Activated CD4-positive, alpha-beta T cell treated with anti-CD3 and anti-CD28 coated beads for 36 hours (primary cell): ENCODE measurements at regions of chr16 and their contacts with region 1.

Region 1: DNA sequence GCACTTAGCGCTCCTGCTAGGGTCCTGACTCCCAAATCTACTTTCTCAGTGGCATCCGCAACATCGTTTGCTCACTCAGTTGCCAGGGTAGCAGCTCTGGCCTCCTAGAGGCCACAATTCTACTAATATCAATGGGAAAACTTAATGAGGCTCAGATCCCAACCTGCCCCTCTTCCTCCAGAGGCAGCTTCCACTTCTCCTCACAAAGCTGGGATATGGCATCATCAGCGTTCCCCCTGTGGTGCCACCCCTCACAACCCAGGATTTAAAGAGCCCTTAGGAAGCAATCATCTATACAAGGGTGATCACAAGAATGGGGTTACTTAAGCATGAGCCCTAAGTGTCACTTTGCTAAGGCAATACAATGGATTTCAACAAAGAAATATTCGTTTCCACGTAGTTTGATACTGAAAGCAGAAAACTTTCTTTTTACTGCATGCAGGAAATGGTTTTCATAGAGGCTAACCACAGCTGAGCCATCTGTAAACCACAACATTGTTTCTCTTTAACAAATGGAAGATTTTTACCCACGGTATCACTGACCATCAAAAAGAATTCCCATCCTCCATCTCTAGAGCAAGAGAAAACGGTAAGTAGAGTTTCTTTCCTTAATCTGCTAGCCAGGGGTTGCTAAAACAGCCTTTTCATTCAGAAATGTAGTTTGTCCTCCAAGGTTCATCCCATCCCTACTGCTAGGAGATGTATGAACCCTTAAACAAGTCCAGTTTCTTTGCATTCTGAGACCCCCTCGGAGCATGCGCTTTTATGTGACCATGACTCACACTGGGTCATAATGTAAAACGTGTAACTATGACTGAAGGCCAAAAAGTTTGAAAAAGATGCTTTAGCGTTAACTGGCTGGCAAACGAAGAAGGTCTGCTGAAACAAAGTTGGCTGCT is 68.3 kb upstream of the BCAR1 start:
- DNase-seq: peak; percentile 25
- ATAC-seq: peak; percentile 75
- H3K4me3 Mint-ChIP-seq: no peak overlapping the region
- H3K27ac Mint-ChIP-seq: no peak overlapping the region
- H3K4me1 Mint-ChIP-seq: peaks cover 35% of the 10 kb centered on the region
- H3K27me3 Mint-ChIP-seq: peaks cover 2% of the 10 kb centered on the region

Region 2: GRCh38 chr16:74896389-74897240 is 423.1 kb before region 1 on chr16:
- CTCF ChIA-PET with region 1: no interaction called
- POLR2A ChIA-PET with region 1: no interaction called
- intact Hi-C with region 1: no loop called
- DNase-seq: no peak
- ATAC-seq: peak; percentile 51
- H3K4me3 Mint-ChIP-seq: no peak overlapping the region
- H3K27ac Mint-ChIP-seq: no peak overlapping the region
- H3K4me1 Mint-ChIP-seq: no peaks in the 10 kb centered on the region
- H3K27me3 Mint-ChIP-seq: no peaks in the 10 kb centered on the region

Region 3: DNA sequence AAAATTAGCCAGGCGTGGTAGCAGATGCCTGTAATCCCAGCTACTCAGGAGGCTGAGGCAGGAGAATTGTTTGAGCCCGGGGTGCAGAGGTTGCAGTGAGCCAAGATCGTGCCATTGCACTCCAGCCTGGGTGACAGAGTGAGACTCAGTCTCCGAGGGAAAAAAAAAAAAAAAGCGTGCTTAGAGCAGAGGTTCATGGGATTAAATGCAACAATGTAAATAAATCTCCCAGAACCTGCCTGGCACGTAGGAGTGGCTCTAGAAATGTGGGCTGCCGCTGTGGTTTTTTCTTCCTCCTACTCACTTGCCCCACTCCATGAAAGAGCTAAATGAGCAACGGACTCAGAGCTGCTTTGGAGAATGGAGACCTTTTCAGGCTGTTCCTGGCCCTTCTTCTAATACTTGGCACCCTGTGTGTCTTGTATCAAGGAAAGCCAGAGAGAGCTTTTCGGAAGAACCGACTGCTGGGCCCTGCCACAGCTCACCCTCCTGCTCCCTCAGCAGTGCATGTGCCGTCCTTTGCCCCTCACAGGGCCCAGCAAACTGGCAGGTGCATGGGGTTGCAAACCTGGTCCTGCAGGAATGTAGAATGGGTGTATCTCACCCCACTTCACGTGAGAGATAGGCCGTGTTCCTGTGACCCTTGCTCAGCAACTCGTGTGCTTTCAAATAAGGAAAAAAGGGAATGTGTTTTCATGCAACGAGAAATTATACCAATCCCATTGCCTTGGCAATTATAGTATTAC is 255.2 kb before region 1 on chr16:
- CTCF ChIA-PET with region 1: no interaction called
- POLR2A ChIA-PET with region 1: no interaction called
- intact Hi-C with region 1: no loop called
- DNase-seq: peak; percentile 62
- ATAC-seq: peak; percentile 58
- H3K4me3 Mint-ChIP-seq: peak overlapping the region; percentile 56
- H3K27ac Mint-ChIP-seq: peak overlapping the region; percentile 74
- H3K4me1 Mint-ChIP-seq: peaks cover 41% of the 10 kb centered on the region
- H3K27me3 Mint-ChIP-seq: no peaks in the 10 kb centered on the region

Region 4: GRCh38 chr16:75305364-75306098 is 14.2 kb before region 1 on chr16:
- CTCF ChIA-PET with region 1: interaction called, 3 read pairs
- POLR2A ChIA-PET with region 1: no interaction called
- intact Hi-C with region 1: loop called in 1 of 2 experiments (anchors 1 kb)
- DNase-seq: peak; percentile 87
- ATAC-seq: peak; percentile 96
- H3K4me3 Mint-ChIP-seq: no peak overlapping the region
- H3K27ac Mint-ChIP-seq: peak overlapping the region; percentile 84
- H3K4me1 Mint-ChIP-seq: peaks cover 29% of the 10 kb centered on the region
- H3K27me3 Mint-ChIP-seq: no peaks in the 10 kb centered on the region